ENCODE measurements at regions of chr20 and their contacts with region 1.

Region 1: GRCh38 chr20:54320115-54320607 is 112.3 kb downstream of the PFDN4 start:
- DNase-seq: peak; percentile 37
- H3K4me3 Mint-ChIP-seq: no peak overlapping the region
- H3K27ac Mint-ChIP-seq: peak overlapping the region; percentile 83
- H3K4me1 Mint-ChIP-seq: peaks cover 75% of the 10 kb centered on the region
- H3K27me3 Mint-ChIP-seq: peaks cover 2% of the 10 kb centered on the region

Region 2: DNA sequence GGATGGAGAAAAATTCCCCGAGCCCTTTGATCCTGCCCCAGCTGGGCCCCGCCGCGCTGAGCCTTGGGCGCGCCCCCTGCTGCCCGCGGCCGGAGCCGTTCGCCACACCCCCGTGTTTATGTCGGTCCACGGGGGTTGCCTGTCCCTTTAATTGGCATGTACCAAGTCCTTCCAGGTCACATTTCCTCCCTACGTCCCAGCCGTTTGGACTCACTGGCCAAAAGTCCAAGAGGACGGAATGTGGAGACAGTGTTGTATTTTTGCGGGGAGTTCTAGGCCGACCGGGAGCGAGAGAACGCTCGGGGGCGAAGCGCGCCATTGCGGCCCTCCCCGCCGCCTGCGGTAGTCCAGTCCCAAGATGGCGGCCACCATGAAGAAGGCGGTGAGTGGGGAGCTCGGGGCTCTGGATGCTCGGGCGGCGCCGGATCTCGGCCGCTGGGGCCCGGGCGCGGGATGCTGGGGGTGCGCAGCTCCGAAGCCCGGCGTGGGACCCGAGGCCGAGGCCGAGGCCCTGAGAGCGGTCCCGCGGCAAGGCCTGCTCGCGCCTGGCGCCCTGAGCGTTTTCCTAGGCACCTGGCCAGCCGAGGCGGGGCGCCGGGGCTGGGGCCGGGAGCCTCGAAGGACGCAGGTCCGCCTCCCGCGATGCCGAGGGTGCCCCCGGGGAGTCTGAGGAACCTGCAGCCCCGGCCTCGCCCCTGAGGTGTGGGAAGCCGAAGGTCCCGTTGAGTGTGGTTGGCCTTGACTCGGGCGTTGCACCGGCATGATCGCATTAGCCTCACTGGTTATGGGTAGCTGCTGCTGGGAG is 112.2 kb before region 1 on chr20 and contains the start of gene PFDN4:
- CTCF ChIA-PET with region 1: no interaction called
- intact Hi-C with region 1: loop called (anchors 5 kb)
- DNase-seq: peak; percentile 86
- H3K4me3 Mint-ChIP-seq: peak within 1 kb of the TSS; percentile 90
- H3K27ac Mint-ChIP-seq: peak within 1 kb of the TSS; percentile 98
- H3K4me1 Mint-ChIP-seq: peaks cover 42% of the 10 kb centered on the region
- H3K27me3 Mint-ChIP-seq: no peaks in the 10 kb centered on the region
- total RNA-seq, gene PFDN4: 48.8 to 53.3 TPM

Region 3: GRCh38 chr20:54284934-54285704 is 35.0 kb before region 1 on chr20:
- CTCF ChIA-PET with region 1: no interaction called
- intact Hi-C with region 1: loop called (anchors 1 kb)
- DNase-seq: peak; percentile 72
- H3K4me3 Mint-ChIP-seq: peak overlapping the region; percentile 85
- H3K27ac Mint-ChIP-seq: peak overlapping the region; percentile 99
- H3K4me1 Mint-ChIP-seq: peaks cover 29% of the 10 kb centered on the region
- H3K27me3 Mint-ChIP-seq: no peaks in the 10 kb centered on the region

Region 4: DNA sequence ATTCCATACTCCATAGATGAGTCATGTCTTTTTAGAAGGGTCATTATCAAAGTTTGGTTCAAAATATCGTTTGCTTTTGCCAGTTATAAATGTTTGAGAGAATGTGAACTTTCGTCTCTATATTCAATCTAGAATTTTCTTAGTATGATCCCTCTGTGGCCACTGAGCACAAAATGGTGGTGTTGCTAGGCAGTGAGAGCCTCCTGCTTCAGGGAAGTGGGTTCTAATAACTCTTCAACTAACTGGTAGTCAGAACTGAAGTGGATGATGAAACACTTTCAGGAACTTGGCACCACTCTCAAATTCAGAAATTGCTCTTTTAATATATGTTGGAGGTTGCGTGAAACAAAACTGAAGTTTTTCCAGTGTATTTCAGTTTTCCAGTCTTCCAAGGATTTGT is 30.3 kb after region 1 on chr20:
- CTCF ChIA-PET with region 1: no interaction called
- intact Hi-C with region 1: loop called (anchors 1 kb)
- DNase-seq: peak; percentile 36
- H3K4me3 Mint-ChIP-seq: no peak overlapping the region
- H3K27ac Mint-ChIP-seq: peak overlapping the region; percentile 39
- H3K4me1 Mint-ChIP-seq: peaks cover 32% of the 10 kb centered on the region
- H3K27me3 Mint-ChIP-seq: peaks cover 17% of the 10 kb centered on the region

Region 5: GRCh38 chr20:54649511-54649962 is 329.4 kb after region 1 on chr20:
- CTCF ChIA-PET with region 1: no interaction called
- intact Hi-C with region 1: loop called (anchors 5 kb)
- DNase-seq: peak; percentile 87
- H3K4me3 Mint-ChIP-seq: no peak overlapping the region
- H3K27ac Mint-ChIP-seq: no peak overlapping the region
- H3K4me1 Mint-ChIP-seq: no peaks in the 10 kb centered on the region
- H3K27me3 Mint-ChIP-seq: peaks cover 12% of the 10 kb centered on the region

Measured in activated naive CD4-positive, alpha-beta T cell treated with anti-CD3 and anti-CD28 coated beads for 36 hours (primary cell).